GM12878 (cell line): ENCODE measurements at regions of chr14 and their contacts with region 1.

Region 1: GRCh38 chr14:57533214-57533613 is 39.6 kb upstream of the CCDC198 start:
- DNase-seq: peak; percentile 31
- ATAC-seq: peak; percentile 86
- H3K4me3 ChIP-seq: no peak overlapping the region
- H3K27ac ChIP-seq: no peak overlapping the region
- H3K4me1 ChIP-seq: no peaks in the 10 kb centered on the region
- H3K27me3 ChIP-seq: no peaks in the 10 kb centered on the region
- CTCF ChIP-seq: peak; percentile 43 to 59 (median 51)
- EP300 ChIP-seq: no peak
- POLR2A ChIP-seq: no peak
- RAD21 ChIP-seq: peak; percentile 41; the same call in 1 of the 2 replicates

Region 2: DNA sequence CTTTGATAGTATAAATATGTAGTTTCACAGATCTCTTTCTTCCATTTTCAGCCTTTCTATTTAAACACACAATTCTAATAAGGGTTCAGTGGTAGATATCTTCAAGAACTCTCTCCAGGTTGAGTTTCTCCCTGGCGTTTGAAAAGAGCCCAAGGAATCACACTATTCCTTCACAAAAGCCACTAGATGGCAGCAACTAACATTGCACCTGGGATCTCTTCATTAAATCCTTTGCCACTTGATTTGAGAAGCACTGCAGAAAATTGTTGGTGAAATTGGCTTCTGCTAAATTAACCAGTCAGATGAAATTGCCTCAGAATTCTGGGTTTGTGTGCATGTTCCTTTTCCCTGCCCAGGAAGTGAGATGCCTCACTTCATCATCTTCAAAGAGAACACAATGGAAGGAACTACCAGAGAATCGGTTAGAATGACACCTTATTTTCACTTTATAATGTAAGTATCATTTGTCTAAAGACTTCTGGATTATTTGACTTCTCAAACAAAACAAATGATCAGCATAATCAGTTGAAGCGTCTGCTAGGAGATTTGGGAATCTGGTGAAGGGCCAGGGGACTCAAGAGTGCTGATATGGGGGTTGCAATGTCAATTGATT is 46.3 kb before region 1 on chr14:
- CTCF ChIA-PET with region 1: interaction called, 16 read pairs
- POLR2A ChIA-PET with region 1: no interaction called
- RAD21 ChIA-PET with region 1: interaction called, 3 read pairs
- SMC1A ChIA-PET with region 1: interaction called, 7 read pairs
- in situ Hi-C with region 1: no loop called
- intact Hi-C with region 1: loop called (anchors 2 kb)
- DNase-seq: no peak
- ATAC-seq: peak; percentile 63
- H3K4me3 ChIP-seq: no peak overlapping the region
- H3K27ac ChIP-seq: no peak overlapping the region
- H3K4me1 ChIP-seq: peaks cover 11% of the 10 kb centered on the region
- H3K27me3 ChIP-seq: no peaks in the 10 kb centered on the region
- CTCF ChIP-seq: peak; percentile 59 to 76 (median 59)
- EP300 ChIP-seq: no peak
- POLR2A ChIP-seq: no peak
- RAD21 ChIP-seq: peak; percentile 59

Region 3: DNA sequence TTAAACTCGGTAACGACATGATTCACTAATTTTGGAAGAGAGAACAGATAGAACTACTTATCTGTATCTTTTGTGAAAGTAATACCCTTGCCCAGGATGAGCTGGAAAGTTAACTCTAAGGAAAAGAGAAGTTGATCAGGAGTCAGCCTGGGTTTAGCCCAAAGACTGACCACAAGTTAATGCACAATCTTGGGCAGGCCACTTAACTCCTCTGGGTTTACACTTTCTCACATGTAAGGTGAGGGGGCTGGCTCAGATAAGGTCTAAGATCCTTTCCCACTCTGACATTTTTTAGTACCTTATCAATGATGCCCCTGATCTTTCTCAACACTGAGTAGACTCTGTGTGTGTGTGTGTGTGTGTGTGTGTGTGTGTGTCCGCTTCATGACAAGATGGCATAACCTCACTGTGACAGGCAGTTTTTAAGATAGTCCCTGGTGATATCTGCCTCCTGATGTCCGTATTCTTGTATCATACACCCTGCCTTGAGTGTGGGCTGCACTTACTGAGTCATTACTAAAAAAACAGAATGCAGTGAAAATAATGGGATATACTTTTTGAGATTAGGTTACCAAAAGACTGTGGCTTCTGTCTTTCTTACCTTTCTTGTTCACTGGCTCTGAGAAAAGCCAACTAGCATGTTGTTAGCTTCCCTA is 16.7 kb after region 1 on chr14:
- CTCF ChIA-PET with region 1: interaction called, 12 read pairs
- POLR2A ChIA-PET with region 1: no interaction called
- RAD21 ChIA-PET with region 1: interaction called, 4 read pairs
- SMC1A ChIA-PET with region 1: interaction called, 14 read pairs
- in situ Hi-C with region 1: no loop called
- intact Hi-C with region 1: no loop called
- DNase-seq: no peak
- ATAC-seq: peak; percentile 70
- H3K4me3 ChIP-seq: no peak overlapping the region
- H3K27ac ChIP-seq: no peak overlapping the region
- H3K4me1 ChIP-seq: no peaks in the 10 kb centered on the region
- H3K27me3 ChIP-seq: no peaks in the 10 kb centered on the region
- CTCF ChIP-seq: no peak
- EP300 ChIP-seq: no peak
- POLR2A ChIP-seq: no peak
- RAD21 ChIP-seq: no peak

Region 4: GRCh38 chr14:57574617-57575303 is 41.5 kb after region 1 on chr14:
- CTCF ChIA-PET with region 1: interaction called, 54 read pairs
- POLR2A ChIA-PET with region 1: no interaction called
- RAD21 ChIA-PET with region 1: interaction called, 10 read pairs
- SMC1A ChIA-PET with region 1: interaction called, 16 read pairs
- in situ Hi-C with region 1: no loop called
- intact Hi-C with region 1: loop called (anchors 5 kb)
- DNase-seq: no peak
- ATAC-seq: peak; percentile 44
- H3K4me3 ChIP-seq: no peak overlapping the region
- H3K27ac ChIP-seq: no peak overlapping the region
- H3K4me1 ChIP-seq: no peaks in the 10 kb centered on the region
- H3K27me3 ChIP-seq: no peaks in the 10 kb centered on the region
- CTCF ChIP-seq: peak in 1 of 3 experiments; percentile 37; a peak in 1 of 6 replicates
- EP300 ChIP-seq: no peak
- POLR2A ChIP-seq: no peak
- RAD21 ChIP-seq: no peak

Region 5: DNA sequence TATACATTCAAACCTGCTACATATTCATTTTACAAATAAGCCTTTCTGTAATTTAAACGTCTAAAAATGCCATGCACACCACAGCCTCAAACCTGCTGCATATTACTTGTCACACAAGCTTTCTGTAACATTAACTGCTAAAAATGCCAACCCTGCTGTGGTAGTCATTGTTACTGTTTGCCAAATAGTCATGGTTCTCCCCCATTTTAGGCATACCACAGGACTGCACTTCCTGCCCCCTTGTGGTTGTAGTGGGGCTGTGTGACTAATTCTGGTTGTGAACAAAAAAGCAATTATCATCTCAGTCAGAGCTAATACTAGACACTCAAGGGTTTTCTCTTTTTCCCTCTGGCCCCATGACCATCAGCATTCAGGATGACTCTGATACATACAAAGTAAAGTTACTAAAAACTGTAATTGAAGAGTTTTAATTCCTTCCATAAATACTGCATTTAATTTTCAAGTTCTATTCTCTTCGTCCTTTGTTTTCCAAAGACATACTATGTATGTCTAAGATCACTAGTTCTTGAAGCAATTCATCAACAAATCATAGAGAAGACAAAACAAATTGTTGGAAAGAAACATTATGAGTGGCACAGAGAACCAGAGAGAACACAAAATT is 338.4 kb after region 1 on chr14:
- CTCF ChIA-PET with region 1: interaction called, 27 read pairs
- POLR2A ChIA-PET with region 1: no interaction called
- RAD21 ChIA-PET with region 1: interaction called, 5 read pairs
- SMC1A ChIA-PET with region 1: interaction called, 6 read pairs
- in situ Hi-C with region 1: no loop called
- intact Hi-C with region 1: loop called (anchors 1 kb)
- DNase-seq: peak; percentile 2
- ATAC-seq: peak; percentile 96
- H3K4me3 ChIP-seq: no peak overlapping the region
- H3K27ac ChIP-seq: no peak overlapping the region
- H3K4me1 ChIP-seq: no peaks in the 10 kb centered on the region
- H3K27me3 ChIP-seq: no peaks in the 10 kb centered on the region
- CTCF ChIP-seq: peak; percentile 54 to 67 (median 60)
- EP300 ChIP-seq: no peak
- POLR2A ChIP-seq: no peak
- RAD21 ChIP-seq: peak; percentile 54